ENCODE measurements at regions of chr20 and their contacts with region 1.

Region 1: GRCh38 chr20:31446084-31446819 is 5.8 kb downstream of the DEFB123 start:
- DNase-seq: no peak
- H3K4me3 Mint-ChIP-seq: no peak overlapping the region
- H3K27ac Mint-ChIP-seq: no peak overlapping the region
- H3K4me1 Mint-ChIP-seq: no peaks in the 10 kb centered on the region
- H3K27me3 Mint-ChIP-seq: peaks cover 39% of the 10 kb centered on the region
- CTCF ChIP-seq: no peak

Region 2: GRCh38 chr20:31414380-31414779 is 31.9 kb before region 1 on chr20:
- CTCF ChIA-PET with region 1: interaction called, 4 read pairs
- intact Hi-C with region 1: loop called (anchors 5 kb)
- DNase-seq: no peak
- H3K4me3 Mint-ChIP-seq: no peak overlapping the region
- H3K27ac Mint-ChIP-seq: no peak overlapping the region
- H3K4me1 Mint-ChIP-seq: no peaks in the 10 kb centered on the region
- H3K27me3 Mint-ChIP-seq: peaks cover 66% of the 10 kb centered on the region
- CTCF ChIP-seq: no peak

Measured in Calu3 (cell line).